ENCODE measurements at regions of chr14 and their contacts with region 1.

Region 1: DNA sequence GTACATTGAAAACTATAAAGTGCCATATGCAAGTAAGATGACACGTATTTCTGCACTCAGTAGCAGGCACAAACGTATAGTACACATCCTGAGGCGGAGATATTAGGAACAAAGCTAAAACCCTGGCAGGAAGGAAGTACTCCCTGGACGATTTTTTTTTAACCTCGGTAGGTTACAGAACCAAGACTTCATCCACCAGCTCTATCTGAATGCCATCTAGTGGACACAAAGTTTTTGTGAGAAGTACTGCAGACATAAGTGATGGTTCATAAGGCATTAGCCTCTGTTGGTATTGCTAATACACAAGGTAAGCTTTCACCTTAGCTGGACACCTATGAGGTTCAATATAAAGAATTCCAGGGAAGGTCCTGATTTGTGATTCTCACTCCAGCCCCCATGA is 83.0 kb upstream of the CCDC196 start:
- DNase-seq: peak; percentile 70
- ATAC-seq: peak; percentile 88
- H3K4me3 ChIP-seq: no peak overlapping the region
- H3K27ac ChIP-seq: no peak overlapping the region
- H3K4me1 ChIP-seq: no peaks in the 10 kb centered on the region
- H3K27me3 ChIP-seq: no peaks in the 10 kb centered on the region
- CTCF ChIP-seq: peak; percentile 80

Region 2: GRCh38 chr14:66359500-66359899 is 43.7 kb before region 1 on chr14:
- CTCF ChIA-PET with region 1: interaction called, 67 read pairs
- POLR2A ChIA-PET with region 1: interaction called, 5 read pairs
- intact Hi-C with region 1: loop called (anchors 1 kb)
- DNase-seq: peak; percentile 70
- ATAC-seq: peak; percentile 34
- H3K4me3 ChIP-seq: no peak overlapping the region
- H3K27ac ChIP-seq: no peak overlapping the region
- H3K4me1 ChIP-seq: no peaks in the 10 kb centered on the region
- H3K27me3 ChIP-seq: peaks cover 40% of the 10 kb centered on the region
- CTCF ChIP-seq: peak; percentile 84

Region 3: DNA sequence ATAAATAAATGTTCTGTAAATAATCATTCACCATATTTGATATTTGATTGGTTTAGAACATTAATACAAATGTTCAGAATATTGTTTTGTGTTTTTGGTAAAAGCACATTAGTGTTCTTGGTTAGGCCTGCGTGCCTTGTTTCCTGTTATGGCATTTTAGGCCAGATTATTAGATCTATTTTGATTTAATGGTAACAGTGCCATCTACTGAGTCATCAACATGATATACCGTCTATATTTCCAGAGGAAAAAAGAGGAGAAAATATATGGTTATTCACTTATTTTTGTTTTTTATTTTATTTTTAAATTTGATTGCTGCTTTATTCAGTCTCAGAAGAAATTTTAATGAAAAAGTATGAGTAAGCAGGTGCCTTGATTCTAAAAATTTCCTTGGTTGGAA is 165.0 kb after region 1 on chr14:
- CTCF ChIA-PET with region 1: interaction called, 6 read pairs
- POLR2A ChIA-PET with region 1: no interaction called
- intact Hi-C with region 1: loop called (anchors 5 kb)
- DNase-seq: no peak
- ATAC-seq: peak; percentile 37
- H3K4me3 ChIP-seq: no peak overlapping the region
- H3K27ac ChIP-seq: no peak overlapping the region
- H3K4me1 ChIP-seq: peaks cover 3% of the 10 kb centered on the region; the same call in 1 of the 2 replicates
- H3K27me3 ChIP-seq: no peaks in the 10 kb centered on the region
- CTCF ChIP-seq: 0 out of 2 replicates have a peak, but pooled peaks have one; percentile 26

Region 4: GRCh38 chr14:66746316-66747006 is 343.3 kb after region 1 on chr14:
- CTCF ChIA-PET with region 1: no interaction called
- POLR2A ChIA-PET with region 1: no interaction called
- intact Hi-C with region 1: loop called (anchors 2 kb)
- DNase-seq: peak; percentile 71
- ATAC-seq: peak; percentile 95
- H3K4me3 ChIP-seq: no peak overlapping the region
- H3K27ac ChIP-seq: no peak overlapping the region
- H3K4me1 ChIP-seq: no peaks in the 10 kb centered on the region
- H3K27me3 ChIP-seq: no peaks in the 10 kb centered on the region
- CTCF ChIP-seq: peak; percentile 90

Region 5: DNA sequence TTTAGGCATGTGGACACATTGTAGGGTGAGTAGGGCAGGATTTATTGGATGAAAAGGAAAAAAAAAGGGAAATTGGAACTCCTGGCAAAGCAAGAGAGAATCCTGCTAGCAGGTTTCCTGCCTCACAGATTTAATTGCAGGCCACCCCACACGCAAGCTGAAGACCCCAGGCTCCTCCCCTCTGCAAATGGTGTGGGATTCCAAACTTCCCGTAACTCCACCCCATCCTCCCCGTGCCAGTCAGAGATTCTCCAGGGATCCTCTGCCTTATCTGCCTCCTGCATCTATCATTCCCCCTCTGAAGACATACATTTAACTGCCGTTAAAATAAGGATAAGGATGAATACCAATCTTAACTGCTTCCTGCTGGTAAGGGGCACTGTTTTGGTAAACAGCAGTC is 536.2 kb after region 1 on chr14:
- CTCF ChIA-PET with region 1: interaction called, 11 read pairs
- POLR2A ChIA-PET with region 1: no interaction called
- intact Hi-C with region 1: no loop called
- DNase-seq: no peak
- ATAC-seq: no peak
- H3K4me3 ChIP-seq: no peak overlapping the region
- H3K27ac ChIP-seq: no peak overlapping the region
- H3K4me1 ChIP-seq: no peaks in the 10 kb centered on the region
- H3K27me3 ChIP-seq: no peaks in the 10 kb centered on the region
- CTCF ChIP-seq: no peak

Measured in PC-3 (cell line).